Activated B cell treated with CpG ODN at 0.5 μM for 24 hours (primary cell): ENCODE measurements at regions of chr3 and their contacts with region 1.

Region 1: GRCh38 chr3:42739401-42740158 is 33.5 kb downstream of the CCDC13 start:
- DNase-seq: no peak
- ATAC-seq: no peak
- H3K4me3 Mint-ChIP-seq: no peak overlapping the region
- H3K27ac Mint-ChIP-seq: no peak overlapping the region
- H3K4me1 Mint-ChIP-seq: peaks cover 21% of the 10 kb centered on the region
- H3K27me3 Mint-ChIP-seq: no peaks in the 10 kb centered on the region
- CTCF ChIP-seq: no peak

Region 2: GRCh38 chr3:42214565-42215283 is 524.9 kb before region 1 on chr3:
- CTCF ChIA-PET with region 1: no interaction called
- POLR2A ChIA-PET with region 1: no interaction called
- intact Hi-C with region 1: no loop called
- DNase-seq: no peak
- ATAC-seq: no peak
- H3K4me3 Mint-ChIP-seq: no peak overlapping the region
- H3K27ac Mint-ChIP-seq: peak overlapping the region; percentile 67
- H3K4me1 Mint-ChIP-seq: peaks cover 62% of the 10 kb centered on the region
- H3K27me3 Mint-ChIP-seq: no peaks in the 10 kb centered on the region
- CTCF ChIP-seq: no peak

Region 3: GRCh38 chr3:42660893-42661292 is 78.7 kb before region 1 on chr3:
- CTCF ChIA-PET with region 1: no interaction called
- POLR2A ChIA-PET with region 1: no interaction called
- intact Hi-C with region 1: loop called (anchors 5 kb)
- DNase-seq: no peak
- ATAC-seq: no peak
- H3K4me3 Mint-ChIP-seq: no peak overlapping the region
- H3K27ac Mint-ChIP-seq: no peak overlapping the region
- H3K4me1 Mint-ChIP-seq: peaks cover 10% of the 10 kb centered on the region
- H3K27me3 Mint-ChIP-seq: no peaks in the 10 kb centered on the region
- CTCF ChIP-seq: no peak